A549 (cell line): ENCODE measurements at regions of chr17 and their contacts with region 1.

Region 1: GRCh38 chr17:60960162-60961062 is 282.8 kb downstream of the BCAS3 start:
- DNase-seq: no peak
- ATAC-seq: no peak
- H3K4me3 ChIP-seq: no peak overlapping the region
- H3K27ac ChIP-seq: no peak overlapping the region
- H3K4me1 ChIP-seq: peaks cover 15% of the 10 kb centered on the region; the same call in 2 of the 3 replicates
- CTCF ChIP-seq: no peak
- EP300 ChIP-seq: no peak
- POLR2A ChIP-seq: no peak
- RAD21 ChIP-seq: no peak

Region 2: DNA sequence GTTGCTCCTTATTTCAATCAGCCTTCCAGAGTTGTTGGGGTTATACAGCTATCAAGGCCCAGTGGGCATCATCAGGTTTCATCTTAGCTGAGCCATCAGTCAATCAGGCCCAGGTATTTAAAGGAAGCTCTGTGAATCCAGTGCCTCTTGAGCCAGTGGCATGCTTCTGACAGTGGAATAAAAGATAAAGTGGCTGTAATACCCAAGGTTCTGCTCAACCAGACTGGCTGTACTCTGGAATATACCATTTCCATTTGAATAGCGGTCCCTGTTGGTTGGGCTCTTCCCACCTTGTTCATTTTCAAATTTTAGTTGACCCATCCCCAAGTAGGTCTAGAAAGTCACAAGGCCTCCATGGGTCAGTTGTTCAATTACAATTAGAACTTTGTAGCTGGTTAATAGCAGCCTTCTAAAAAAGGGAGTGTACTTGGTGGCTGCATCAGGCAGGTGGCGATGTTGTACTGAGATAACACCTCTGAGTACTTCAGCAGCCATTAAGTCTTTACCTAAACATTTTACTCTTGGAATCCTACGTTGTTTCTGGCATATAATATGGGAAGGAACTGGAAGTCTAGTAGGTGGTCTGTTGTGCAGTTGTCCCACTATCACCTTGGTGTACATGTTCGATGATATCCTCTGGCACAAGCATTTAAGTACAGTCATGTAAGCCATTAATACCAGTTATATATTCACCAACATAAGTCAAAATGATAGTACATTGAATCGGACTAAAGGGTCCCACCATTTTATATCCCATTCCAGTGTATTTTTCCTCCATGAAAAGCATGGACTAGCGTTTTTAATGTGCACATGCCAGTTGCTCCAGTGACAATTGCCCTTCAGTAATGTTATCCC is 11.3 kb after region 1 on chr17:
- CTCF ChIA-PET with region 1: interaction called, 21 read pairs
- POLR2A ChIA-PET with region 1: no interaction called
- DNase-seq: peak; percentile 37 to 73
- ATAC-seq: peak; percentile 89 to 96
- H3K4me3 ChIP-seq: no peak overlapping the region
- H3K27ac ChIP-seq: no peak overlapping the region
- H3K4me1 ChIP-seq: peaks cover 7% of the 10 kb centered on the region; the same call in 1 of the 3 replicates
- CTCF ChIP-seq: peak; percentile 79
- EP300 ChIP-seq: no peak
- POLR2A ChIP-seq: no peak
- RAD21 ChIP-seq: peak; percentile 81 to 88